Right ventricle myocardium inferior (tissue), 1 donor: ENCODE measurements at regions of chr11 and their contacts with region 1.

Region 1: GRCh38 chr11:112588252-112588694 is 327.6 kb upstream of the PLET1 start:
- DNase-seq: peak; percentile 84
- ATAC-seq: peak; percentile 82

Region 2: DNA sequence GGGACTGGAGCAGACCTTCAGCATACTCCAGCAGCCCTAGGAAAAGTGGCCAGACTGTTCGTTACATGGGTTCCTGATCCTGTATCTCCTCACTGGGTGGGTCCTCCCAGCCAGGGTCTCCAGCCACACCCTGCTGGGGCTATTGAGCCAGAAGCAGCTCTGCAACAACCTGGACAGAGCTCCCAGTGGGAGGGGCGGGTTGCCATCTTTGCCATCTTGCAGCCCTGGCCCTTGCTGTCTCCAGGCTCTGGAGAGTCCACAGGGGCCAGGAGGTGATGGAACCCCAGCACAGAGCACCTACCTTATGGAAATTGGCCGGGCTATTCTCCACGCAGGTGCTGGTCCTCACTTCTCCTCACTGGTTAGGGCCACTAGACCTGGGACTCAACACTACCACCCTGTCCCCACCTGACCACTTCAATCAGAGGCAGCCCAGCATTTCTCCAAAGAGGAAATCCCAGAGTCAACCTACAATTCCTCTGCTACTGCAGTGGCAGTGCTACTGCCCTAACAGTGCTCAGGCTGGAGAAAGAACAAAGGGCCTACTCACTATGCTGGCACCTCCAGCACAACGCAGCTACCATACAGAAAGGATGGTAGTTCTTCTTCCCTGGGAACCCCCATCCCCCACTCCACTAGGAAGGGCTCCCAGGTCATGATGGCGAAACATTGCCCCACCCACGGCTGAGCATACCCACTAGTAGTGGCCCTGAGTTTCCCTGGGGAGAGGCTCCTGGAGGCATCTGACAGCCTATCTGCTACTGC is 82.7 kb after region 1 on chr11:
- intact Hi-C with region 1: no loop called
- DNase-seq: no peak
- ATAC-seq: no peak

Region 3: DNA sequence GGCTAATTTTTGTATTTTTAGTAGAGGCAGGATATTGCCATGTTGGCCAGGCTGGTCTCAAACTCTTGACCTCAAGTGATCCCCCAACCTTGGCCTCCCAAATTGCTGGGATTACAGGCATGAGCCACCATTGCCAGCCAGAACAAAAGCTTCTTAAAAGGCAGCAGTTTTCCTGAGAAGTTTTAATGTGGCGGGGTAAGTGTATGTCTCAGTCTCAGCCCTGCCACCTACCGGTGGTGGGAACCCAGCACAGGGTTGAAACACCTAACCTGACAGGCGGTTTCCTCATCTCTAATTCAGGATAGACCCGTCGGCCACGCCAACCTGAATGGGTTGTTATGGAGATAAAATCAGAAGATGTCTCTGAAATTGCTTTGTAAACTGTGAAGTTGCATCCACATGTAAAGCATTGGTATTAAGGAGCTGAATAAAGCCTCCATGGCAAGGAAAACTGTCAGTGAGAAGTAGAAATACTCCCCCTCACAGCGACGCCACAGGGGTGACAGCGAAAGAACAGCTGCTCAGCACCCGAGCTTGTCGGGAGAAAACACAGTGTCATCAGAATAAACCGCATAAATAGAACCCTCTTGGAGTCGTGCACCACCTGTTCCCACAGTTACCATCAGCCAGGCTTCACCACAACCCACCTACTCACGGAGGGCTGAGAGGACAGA is 207.0 kb after region 1 on chr11:
- intact Hi-C with region 1: loop called (anchors 5 kb)
- DNase-seq: peak; percentile 74
- ATAC-seq: peak; percentile 34

Region 4: GRCh38 chr11:112837162-112837826 is 249.0 kb after region 1 on chr11:
- intact Hi-C with region 1: loop called (anchors 5 kb)
- DNase-seq: no peak
- ATAC-seq: peak; percentile 56

Region 5: GRCh38 chr11:113119074-113119473 is 530.8 kb after region 1 on chr11:
- intact Hi-C with region 1: loop called (anchors 5 kb)
- DNase-seq: no peak
- ATAC-seq: peak; percentile 66

Region 6: GRCh38 chr11:113289431-113290187 is 701.3 kb after region 1 on chr11:
- intact Hi-C with region 1: loop called (anchors 2 kb)
- DNase-seq: no peak
- ATAC-seq: peak; percentile 77